ENCODE measurements at regions of chr7 and their contacts with region 1.

Region 1: DNA sequence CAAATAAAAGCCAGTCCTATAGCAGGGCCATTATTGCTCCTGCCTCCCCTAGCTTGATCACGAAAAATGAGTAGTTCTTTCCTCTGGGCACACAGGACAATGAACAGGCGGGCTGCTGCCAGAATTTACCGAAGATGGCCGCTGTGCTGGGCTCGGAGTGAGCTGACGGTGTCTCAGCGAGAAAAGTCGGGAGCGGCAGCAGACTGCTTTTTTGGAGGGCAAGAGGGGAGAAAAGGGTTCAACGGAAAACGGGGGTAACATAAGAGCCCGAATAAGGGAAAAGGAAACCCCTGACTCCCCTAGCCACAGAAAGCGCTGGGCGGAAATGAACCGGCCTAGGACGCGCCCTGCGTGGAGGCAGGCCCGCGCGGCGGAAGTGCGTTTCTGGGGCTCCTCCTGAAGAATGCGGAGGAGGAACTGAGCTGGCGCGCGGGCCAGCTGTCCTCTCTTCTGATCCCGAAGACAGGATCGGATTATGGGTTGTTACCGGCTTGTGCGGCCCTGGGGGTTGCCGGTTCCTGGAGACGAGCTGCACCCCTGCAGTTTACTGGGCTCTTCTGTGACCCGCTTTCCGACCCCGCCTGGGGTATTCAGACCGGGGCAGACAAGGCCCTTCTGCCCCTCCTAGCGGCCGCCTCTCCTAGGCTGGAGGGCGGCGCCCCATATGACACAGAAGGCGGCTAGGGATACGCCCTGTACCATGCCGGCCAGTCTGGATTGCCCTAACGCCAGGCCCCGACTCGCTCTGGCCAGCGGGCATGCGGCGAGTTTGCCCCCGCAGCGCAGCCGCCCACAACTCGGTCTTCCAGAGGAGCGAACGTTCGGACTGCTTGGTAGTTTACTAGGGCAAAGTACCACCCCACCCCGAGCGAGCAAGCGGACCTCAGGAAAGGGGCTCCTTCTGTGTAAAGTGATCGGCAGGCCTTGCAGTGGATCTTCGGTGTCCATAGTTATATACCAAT is 30.1 kb upstream of the KMT2E start:
- DNase-seq: peak; percentile 76 to 88
- H3K4me3 ChIP-seq: peak overlapping the region; percentile 69
- H3K27ac ChIP-seq: peak overlapping the region; percentile 72
- H3K4me1 ChIP-seq: peaks cover 35% of the 10 kb centered on the region
- H3K27me3 ChIP-seq: no peaks in the 10 kb centered on the region
- CTCF ChIP-seq: peak; percentile 39; the same call in 1 of the 2 replicates

Region 2: GRCh38 chr7:104943502-104944343 is 40.1 kb before region 1 on chr7:
- CTCF ChIA-PET with region 1: interaction called, 3 read pairs
- POLR2A ChIA-PET with region 1: interaction called, 11 read pairs
- intact Hi-C with region 1: loop called (anchors 5 kb)
- DNase-seq: peak; percentile 48 to 96
- H3K4me3 ChIP-seq: no peak overlapping the region
- H3K27ac ChIP-seq: no peak overlapping the region
- H3K4me1 ChIP-seq: no peaks in the 10 kb centered on the region; the same call in 1 of the 2 replicates
- H3K27me3 ChIP-seq: no peaks in the 10 kb centered on the region
- CTCF ChIP-seq: no peak

Region 3: DNA sequence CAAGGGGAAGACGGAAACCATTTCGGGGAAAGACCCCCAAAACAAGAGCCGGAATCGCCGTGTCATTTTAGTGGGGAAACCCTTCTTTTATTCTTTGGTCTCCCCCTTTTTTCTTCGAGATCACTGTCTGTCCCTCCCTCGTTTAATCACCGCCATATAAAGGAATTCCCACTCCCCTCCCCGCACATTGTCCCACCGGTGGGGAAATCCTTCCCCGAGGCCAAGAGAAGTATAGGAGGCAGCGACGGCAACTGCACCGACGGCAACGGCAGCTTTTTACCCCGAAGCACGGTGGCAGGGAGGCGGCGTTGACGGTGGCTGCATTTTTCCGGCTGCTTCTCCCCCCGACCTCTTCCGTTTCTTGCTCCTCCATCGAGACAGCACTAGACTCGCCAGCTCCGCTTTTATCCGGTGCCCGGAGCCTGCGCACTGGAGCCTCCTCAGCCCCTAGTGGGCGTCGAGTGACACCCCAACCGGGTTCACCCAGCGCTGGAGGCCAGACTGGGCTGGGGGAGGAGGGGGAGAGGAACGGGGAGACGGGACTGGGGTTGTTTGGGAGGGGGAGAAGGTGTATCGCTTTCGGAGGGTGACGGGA is 29.5 kb after region 1 on chr7:
- CTCF ChIA-PET with region 1: interaction called, 3 read pairs
- POLR2A ChIA-PET with region 1: interaction called, 6 read pairs
- intact Hi-C with region 1: loop called (anchors 1 kb)
- DNase-seq: peak; percentile 74 to 92
- H3K4me3 ChIP-seq: peak overlapping the region; percentile 95
- H3K27ac ChIP-seq: peak overlapping the region; percentile 98
- H3K4me1 ChIP-seq: peaks cover 55% of the 10 kb centered on the region
- H3K27me3 ChIP-seq: no peaks in the 10 kb centered on the region
- CTCF ChIP-seq: peak; percentile 55; the same call in 1 of the 2 replicates

Region 4: DNA sequence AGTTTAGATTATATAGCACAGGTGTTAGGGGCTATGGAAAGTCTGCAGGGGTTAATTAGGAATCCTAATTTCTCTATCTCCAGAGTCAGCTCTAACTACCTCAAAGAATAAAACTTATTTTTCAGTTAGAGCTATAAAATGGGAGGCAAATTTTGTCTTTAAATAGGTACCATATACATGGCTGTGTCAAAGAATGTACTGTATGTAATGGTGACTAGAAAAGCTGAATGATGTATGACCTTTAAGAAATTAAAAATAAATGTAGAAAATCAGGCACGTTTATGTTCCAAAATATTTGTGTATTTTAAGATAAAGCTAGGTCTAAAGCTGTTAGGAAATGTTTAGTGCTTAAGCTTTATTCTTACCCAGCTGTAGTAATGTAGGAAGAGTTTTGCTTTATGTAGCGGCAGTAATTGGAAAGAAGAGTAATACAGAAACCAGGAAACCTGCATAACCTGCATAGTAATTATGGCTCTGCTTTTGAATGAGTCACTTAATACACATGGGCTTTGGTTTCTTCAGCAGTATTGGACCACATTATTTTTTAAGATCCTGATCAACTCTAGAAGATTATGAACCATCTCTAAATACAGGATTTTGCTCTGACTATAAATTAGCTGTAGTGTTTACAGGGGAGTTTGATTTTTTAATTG is 115.1 kb after region 1 on chr7:
- CTCF ChIA-PET with region 1: no interaction called
- POLR2A ChIA-PET with region 1: no interaction called
- intact Hi-C with region 1: loop called (anchors 5 kb)
- DNase-seq: peak in 1 of 2 experiments; percentile 75
- H3K4me3 ChIP-seq: no peak overlapping the region
- H3K27ac ChIP-seq: peak overlapping the region; percentile 60
- H3K4me1 ChIP-seq: peaks cover 7% of the 10 kb centered on the region; the same call in 1 of the 2 replicates
- H3K27me3 ChIP-seq: no peaks in the 10 kb centered on the region
- CTCF ChIP-seq: no peak

Region 5: DNA sequence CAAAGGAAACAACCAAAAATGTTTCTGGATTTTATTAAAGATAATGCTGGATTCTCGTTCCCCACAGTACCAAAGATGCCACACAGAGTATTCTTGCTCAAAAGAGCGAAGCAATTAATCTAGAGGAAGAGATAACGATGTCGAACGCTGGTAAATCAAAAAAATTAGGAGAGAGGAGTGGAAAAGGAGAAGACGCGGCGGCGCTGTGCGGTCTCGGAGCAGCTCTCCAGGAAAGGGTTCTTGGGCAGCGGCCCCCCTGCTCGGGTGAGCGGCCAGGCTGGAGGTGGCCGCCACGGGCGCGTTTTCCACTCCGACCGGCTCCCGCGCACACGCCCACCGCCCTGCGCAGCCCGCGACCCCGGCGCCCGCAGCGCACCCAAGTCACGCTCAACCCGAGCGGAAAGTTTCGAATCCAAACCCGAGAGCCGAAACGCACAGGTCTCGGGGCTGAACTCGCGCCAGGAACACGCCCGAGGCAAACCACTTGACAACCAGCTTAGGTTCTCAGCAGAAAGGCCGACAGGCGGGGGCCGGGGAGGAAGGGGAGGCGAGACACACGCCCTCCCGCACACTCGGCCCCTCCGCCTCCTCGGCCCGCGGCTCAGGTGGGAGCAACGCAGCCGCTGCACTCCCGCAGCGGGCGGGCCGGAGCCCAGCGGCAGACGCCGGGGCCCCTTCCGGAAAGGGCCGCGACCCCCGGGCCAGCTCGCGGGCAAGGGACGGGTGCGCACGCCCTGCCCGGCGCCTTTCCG is 403.9 kb after region 1 on chr7:
- CTCF ChIA-PET with region 1: no interaction called
- POLR2A ChIA-PET with region 1: interaction called, 4 read pairs
- intact Hi-C with region 1: loop called (anchors 5 kb)
- DNase-seq: peak; percentile 42 to 62
- H3K4me3 ChIP-seq: peak overlapping the region; percentile 74
- H3K27ac ChIP-seq: no peak overlapping the region
- H3K4me1 ChIP-seq: peaks cover 11% of the 10 kb centered on the region
- H3K27me3 ChIP-seq: no peaks in the 10 kb centered on the region
- CTCF ChIP-seq: no peak

Region 6: GRCh38 chr7:105493923-105494315 is 510.1 kb after region 1 on chr7:
- CTCF ChIA-PET with region 1: no interaction called
- POLR2A ChIA-PET with region 1: interaction called, 10 read pairs
- intact Hi-C with region 1: no loop called
- DNase-seq: no peak
- H3K4me3 ChIP-seq: no peak overlapping the region
- H3K27ac ChIP-seq: no peak overlapping the region
- H3K4me1 ChIP-seq: no peaks in the 10 kb centered on the region
- H3K27me3 ChIP-seq: no peaks in the 10 kb centered on the region
- CTCF ChIP-seq: no peak

Measured in PC-9 (cell line).